ENCODE measurements at regions of chr1 and their contacts with region 1.

Region 1: DNA sequence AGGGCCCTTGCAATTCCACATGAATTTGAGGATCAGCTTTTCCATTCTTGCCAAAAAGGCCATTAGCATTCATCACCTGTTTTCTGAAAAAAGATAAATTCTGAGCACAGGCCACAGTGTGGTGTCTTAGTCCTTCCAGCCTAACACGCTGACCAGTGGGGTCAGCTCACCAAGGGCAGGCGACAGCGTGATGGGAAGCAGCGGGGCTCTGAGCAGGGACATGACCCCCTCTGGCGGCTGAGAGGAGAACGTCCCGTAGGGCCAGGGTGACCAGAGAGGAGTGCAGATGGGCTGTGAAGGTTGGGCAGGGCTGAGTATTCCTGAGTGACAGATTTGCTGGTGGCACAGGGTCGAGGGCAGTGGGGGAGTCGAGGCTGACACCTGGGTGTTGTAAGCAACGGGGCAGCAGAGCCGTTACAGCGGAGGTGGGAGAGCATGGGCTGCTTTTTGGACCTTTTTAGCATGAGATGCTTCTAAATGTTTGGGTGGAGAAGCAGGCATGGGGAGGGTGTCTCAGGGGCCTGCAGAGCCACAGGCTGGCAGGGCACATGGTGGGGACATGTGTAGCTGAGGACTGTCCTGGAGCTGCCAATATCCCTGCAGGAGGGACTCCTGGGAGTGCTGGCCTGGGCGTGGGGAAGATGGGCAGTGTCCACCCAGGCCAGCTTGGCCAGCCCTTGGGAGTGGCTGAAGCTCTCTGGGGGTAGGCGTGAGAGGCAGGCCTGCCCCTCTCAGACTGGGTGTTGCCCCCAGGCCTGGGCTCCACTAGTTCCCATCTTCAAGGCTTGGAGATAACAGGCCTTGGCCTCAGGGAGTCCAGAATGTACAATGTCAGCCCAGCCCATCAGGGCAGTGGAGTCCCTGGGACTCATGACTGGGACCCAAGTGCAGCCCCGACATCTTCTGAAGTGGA is 8.6 kb upstream of the CALML6 start:
- DNase-seq: peak; percentile 94
- H3K4me3 ChIP-seq: no peak overlapping the region
- H3K27ac ChIP-seq: peak overlapping the region; percentile 36 to 56 (median 39)
- H3K4me1 ChIP-seq: peaks cover 0 to 31% (median 22%) of the 10 kb centered on the region in 4 donors
- H3K27me3 ChIP-seq: no peaks in the 10 kb centered on the region
- CTCF ChIP-seq: peak; percentile 86 to 96 (median 91)
- EP300 ChIP-seq: no peak
- POLR2A ChIP-seq: no peak

Region 2: DNA sequence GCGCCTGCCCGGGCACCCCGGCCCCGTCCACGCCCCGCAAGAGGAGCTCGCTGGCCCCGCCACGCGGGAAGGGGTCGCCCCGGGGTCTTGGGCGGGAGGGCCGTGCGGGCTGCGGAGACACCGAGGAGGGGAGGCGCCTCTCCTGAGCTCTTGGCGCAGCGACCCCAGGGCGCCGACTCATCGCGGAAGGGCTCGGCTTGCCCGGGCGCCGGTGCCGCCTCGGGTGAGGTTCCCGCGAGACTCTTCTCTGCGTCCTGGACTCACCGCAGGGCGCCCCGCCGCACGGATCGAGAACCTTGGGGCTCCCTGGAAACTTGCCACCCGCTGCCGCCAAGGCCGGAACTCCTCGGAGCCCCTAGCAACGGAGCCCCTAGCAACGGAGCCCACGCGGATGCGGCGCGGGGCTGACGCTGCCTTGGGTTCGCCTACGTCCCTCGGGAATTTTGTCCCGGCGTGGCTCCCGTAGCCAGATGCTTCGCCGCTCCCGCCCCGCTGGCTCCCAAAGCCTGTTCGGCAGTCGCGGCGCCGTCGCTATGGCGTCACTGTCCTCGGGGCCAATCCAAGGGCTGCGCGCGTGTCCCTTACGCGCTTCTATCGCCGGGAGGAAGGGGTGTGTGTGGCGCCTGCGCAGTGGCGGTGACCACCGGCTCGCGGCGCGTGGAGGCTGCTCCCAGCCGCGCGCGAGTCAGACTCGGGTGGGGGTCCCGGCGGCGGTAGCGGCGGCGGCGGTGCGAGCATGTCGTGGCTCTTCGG is 394.7 kb before region 1 on chr1 and contains the start of gene ATAD3A:
- intact Hi-C with region 1: loop called (anchors 5 kb)
- DNase-seq: peak; percentile 99
- H3K4me3 ChIP-seq: peak within 1 kb of the TSS; percentile 64 to 97 (median 72)
- H3K27ac ChIP-seq: peak within 1 kb of the TSS; percentile 86 to 96 (median 92)
- H3K4me1 ChIP-seq: peaks cover 0 to 16% (median 13%) of the 10 kb centered on the region in 4 donors
- H3K27me3 ChIP-seq: no peaks in the 10 kb centered on the region
- CTCF ChIP-seq: no peak
- EP300 ChIP-seq: peak in 1 of 4 donors; percentile 65
- POLR2A ChIP-seq: peak; percentile 56 to 63
- total RNA-seq, gene ATAD3A: 8.6 to 14.7 (median 12.1) TPM

Region 3: GRCh38 chr1:1687846-1688245 is 218.6 kb before region 1 on chr1:
- intact Hi-C with region 1: loop called (anchors 5 kb)
- DNase-seq: no peak
- H3K4me3 ChIP-seq: no peak overlapping the region
- H3K27ac ChIP-seq: no peak overlapping the region
- H3K4me1 ChIP-seq: peaks cover 0 to 21% (median 13%) of the 10 kb centered on the region in 4 donors
- H3K27me3 ChIP-seq: no peaks in the 10 kb centered on the region
- CTCF ChIP-seq: no peak
- EP300 ChIP-seq: no peak
- POLR2A ChIP-seq: no peak

Region 4: GRCh38 chr1:1777950-1778662 is 128.3 kb before region 1 on chr1 and contains the start of gene NADK:
- intact Hi-C with region 1: loop called (anchors 2 kb)
- DNase-seq: peak; percentile 78
- H3K4me3 ChIP-seq: peak within 1 kb of the TSS; percentile 79 to 98 (median 88)
- H3K27ac ChIP-seq: peak within 1 kb of the TSS; percentile 90 to 91 (median 91)
- H3K4me1 ChIP-seq: peaks cover 0 to 73% (median 67%) of the 10 kb centered on the region in 4 donors
- H3K27me3 ChIP-seq: no peaks in the 10 kb centered on the region
- CTCF ChIP-seq: no peak
- EP300 ChIP-seq: no peak
- POLR2A ChIP-seq: no peak
- total RNA-seq, gene NADK: 34.9 to 66.7 (median 42.4) TPM

Region 5: GRCh38 chr1:1890506-1891348 is 15.7 kb before region 1 on chr1 and contains the start of gene GNB1:
- intact Hi-C with region 1: loop called (anchors 2 kb)
- DNase-seq: peak; percentile 92
- H3K4me3 ChIP-seq: peak within 1 kb of the TSS; percentile 83 to 97 (median 95)
- H3K27ac ChIP-seq: peak within 1 kb of the TSS; percentile 90 to 100 (median 96)
- H3K4me1 ChIP-seq: peaks cover 0 to 63% (median 59%) of the 10 kb centered on the region in 4 donors
- H3K27me3 ChIP-seq: peaks cover 0 to 15% (median 13%) of the 10 kb centered on the region in 3 donors
- CTCF ChIP-seq: no peak
- EP300 ChIP-seq: no peak
- POLR2A ChIP-seq: no peak
- total RNA-seq, gene GNB1: 119 to 157 (median 145) TPM

Region 6: GRCh38 chr1:2091611-2092604 is 185.5 kb after region 1 on chr1:
- intact Hi-C with region 1: no loop called
- DNase-seq: no peak
- H3K4me3 ChIP-seq: no peak overlapping the region
- H3K27ac ChIP-seq: no peak overlapping the region
- H3K4me1 ChIP-seq: no peaks in the 10 kb centered on the region
- H3K27me3 ChIP-seq: peaks cover 0 to 41% (median 9%) of the 10 kb centered on the region in 3 donors
- CTCF ChIP-seq: peak in 3 of 4 experiments; percentile 31 to 49 (median 45)
- EP300 ChIP-seq: no peak
- POLR2A ChIP-seq: no peak

Measured in sigmoid colon (tissue), 7 donors.